ENCODE measurements at regions of chr10 and their contacts with region 1.

Region 1: DNA sequence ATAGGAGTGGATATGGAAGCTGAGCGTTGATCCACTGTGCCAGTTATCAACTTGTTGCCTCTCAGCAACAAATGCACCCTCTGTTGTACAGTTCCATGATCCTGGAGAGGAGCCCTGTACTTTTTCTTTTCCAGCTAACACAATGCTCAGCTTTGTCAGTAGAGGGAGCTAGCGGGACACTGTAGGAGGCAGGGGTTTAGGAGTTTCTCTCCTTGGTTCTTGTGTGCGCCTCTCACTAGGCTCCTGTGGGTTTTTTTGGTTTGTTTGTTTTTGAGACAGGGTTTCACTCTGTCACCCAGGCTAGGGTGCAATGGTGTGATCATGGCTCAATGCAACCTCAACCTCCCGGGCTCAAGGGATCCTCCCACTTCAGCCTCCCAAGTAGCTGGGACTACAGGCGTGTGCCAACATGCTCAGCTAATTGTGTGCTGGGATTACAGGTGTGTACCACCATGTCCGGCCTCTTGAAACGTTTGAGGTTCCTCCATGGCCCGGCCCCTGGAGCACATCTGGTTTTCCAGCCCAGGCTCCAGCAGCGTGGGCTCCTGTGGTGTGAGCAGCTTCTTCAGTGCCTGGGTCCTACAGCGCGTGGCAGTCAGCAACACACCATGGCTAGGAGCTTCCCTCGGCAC is 12.0 kb upstream of the MARVELD1 start:
- DNase-seq: peak in 1 of 5 donors; percentile 41
- ATAC-seq: peak; percentile 61 to 93 (median 91)
- H3K4me3 ChIP-seq: no peak overlapping the region
- H3K27ac ChIP-seq: no peak overlapping the region
- H3K4me1 ChIP-seq: peaks cover 0 to 7% (median 0%) of the 10 kb centered on the region in 12 donors
- H3K27me3 ChIP-seq: no peaks in the 10 kb centered on the region
- CTCF ChIP-seq: peak; percentile 67 to 89 (median 80)
- POLR2A ChIP-seq: no peak

Region 2: DNA sequence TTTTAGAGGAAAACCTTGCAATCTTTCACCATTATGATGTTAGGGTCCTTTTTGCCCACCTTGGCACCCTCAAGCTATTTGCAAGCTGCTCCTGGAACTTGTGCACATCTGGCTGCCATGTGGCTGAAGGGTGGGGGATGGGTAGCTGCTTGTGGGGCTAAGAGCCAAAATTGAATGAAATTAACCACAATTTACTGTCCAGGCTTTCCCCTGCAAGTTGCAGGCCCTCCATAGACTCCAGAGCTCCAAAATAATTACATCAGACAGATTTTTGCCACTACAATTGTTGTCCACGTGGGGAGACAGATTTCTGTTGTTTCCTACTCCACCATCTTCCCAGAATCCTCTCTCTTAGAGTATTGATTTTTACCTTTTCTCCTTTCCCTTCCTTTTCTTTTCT is 42.0 kb before region 1 on chr10:
- intact Hi-C with region 1: no loop called
- DNase-seq: no peak
- ATAC-seq: no peak
- H3K4me3 ChIP-seq: no peak overlapping the region
- H3K27ac ChIP-seq: no peak overlapping the region
- H3K4me1 ChIP-seq: no peaks in the 10 kb centered on the region
- H3K27me3 ChIP-seq: no peaks in the 10 kb centered on the region
- CTCF ChIP-seq: no peak
- POLR2A ChIP-seq: no peak

Region 3: DNA sequence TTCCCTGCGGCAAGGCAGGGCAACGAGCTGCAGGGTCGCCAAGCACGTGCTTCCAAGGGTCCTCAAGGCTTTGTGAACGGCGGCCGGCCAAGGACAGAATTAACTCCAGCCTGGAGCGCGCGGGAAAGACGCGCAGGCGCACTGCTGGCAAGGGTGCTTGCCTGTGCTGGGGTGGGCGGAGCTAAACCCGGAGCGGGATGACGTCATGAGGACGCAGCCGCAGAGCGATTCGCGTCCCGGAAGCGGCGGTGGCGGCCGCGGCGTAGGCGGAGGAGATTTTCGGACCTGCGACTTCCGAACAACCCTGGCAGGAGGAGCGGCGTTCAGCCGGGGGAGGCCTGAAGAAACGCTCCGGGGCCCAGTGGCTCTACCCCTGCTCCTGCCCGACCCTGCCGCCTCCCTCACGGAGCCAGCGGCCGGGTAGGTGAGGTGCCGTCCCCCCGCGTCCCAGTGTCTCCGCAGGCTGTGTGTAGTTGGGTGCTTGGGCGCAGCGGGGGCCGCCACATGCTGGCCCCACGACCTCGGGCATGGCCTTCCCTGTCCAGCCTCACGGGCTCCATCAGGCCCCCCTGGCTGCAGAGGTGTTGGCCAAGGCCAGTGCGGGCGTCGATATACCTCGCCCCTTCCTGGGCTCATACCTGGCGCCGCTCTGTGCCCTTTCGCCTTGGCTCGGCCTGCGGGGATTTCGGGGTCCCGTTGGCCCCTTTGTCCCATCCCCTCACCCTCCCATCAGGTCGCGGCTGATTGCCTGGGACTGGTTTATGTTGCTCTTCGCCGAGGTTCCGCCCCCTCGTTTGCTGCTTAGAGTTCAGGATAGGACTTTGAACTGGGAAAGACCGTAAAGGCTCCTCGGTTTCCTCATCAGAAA is 35.6 kb after region 1 on chr10 and contains the start of gene ZFYVE27:
- intact Hi-C with region 1: loop called in 4 of 10 experiments (anchors 2 to 5 kb)
- DNase-seq: peak; percentile 97 to 99 (median 98)
- ATAC-seq: peak; percentile 96 to 98 (median 96)
- H3K4me3 ChIP-seq: peak within 1 kb of the TSS; percentile 75 to 100 (median 90)
- H3K27ac ChIP-seq: peak within 1 kb of the TSS; percentile 66 to 97 (median 92)
- H3K4me1 ChIP-seq: peaks cover 4 to 32% (median 18%) of the 10 kb centered on the region in 12 donors
- H3K27me3 ChIP-seq: no peaks in the 10 kb centered on the region
- CTCF ChIP-seq: no peak
- POLR2A ChIP-seq: peak; percentile 87 to 96
- total RNA-seq, gene ZFYVE27: 7.3 to 16.1 (median 13.1) TPM

Measured in heart left ventricle (tissue), 16 donors.